Right cardiac atrium (tissue), 5 donors: ENCODE measurements at regions of chr15 and their contacts with region 1.

Region 1: GRCh38 chr15:70466895-70467529 is 296.3 kb downstream of the UACA start:
- DNase-seq: peak in 2 of 3 donors; percentile 42 to 80
- ATAC-seq: peak; percentile 53 to 54
- H3K4me3 ChIP-seq: no peak overlapping the region
- H3K27ac ChIP-seq: no peak overlapping the region
- H3K4me1 ChIP-seq: no peaks in the 10 kb centered on the region
- H3K27me3 ChIP-seq: no peaks in the 10 kb centered on the region

Region 2: DNA sequence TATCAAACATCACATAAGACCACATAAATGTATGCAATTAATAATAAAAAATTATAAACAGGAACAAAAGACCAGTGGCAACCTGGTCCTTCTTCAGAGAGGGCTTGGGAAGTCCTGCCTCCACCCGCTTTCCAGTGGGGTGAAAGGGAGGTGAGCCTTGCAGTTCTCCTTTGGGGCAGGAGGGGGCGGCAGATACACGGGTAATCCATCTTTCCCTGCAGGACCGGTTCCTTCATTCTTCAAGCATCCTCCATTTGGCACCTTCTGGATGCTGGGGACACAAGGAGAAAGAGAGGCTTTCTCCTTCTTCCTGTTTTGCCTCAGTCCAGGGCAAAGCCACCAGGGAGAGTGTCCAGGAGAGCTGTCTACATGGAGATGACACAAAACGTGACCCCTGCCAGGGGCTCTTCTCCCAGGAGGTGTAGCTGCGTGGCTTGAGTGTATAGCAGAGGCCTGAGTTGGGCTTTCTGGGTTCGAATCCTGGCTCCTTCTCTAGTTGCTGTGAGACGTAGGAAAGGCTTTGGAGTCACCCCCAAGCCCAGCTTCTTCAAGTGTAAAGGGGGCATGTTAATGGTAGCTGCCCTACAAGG is 991.1 kb before region 1 on chr15:
- intact Hi-C with region 1: loop called in 1 of 4 experiments (anchors 5 kb)
- DNase-seq: peak; percentile 74 to 92 (median 89)
- ATAC-seq: peak; percentile 75 to 80
- H3K4me3 ChIP-seq: no peak overlapping the region
- H3K27ac ChIP-seq: no peak overlapping the region
- H3K4me1 ChIP-seq: no peaks in the 10 kb centered on the region
- H3K27me3 ChIP-seq: no peaks in the 10 kb centered on the region

Region 3: GRCh38 chr15:69576035-69576526 is 890.9 kb before region 1 on chr15:
- intact Hi-C with region 1: loop called in 1 of 4 experiments (anchors 10 kb)
- DNase-seq: peak; percentile 43 to 77 (median 76)
- ATAC-seq: peak; percentile 73 to 76
- H3K4me3 ChIP-seq: no peak overlapping the region
- H3K27ac ChIP-seq: no peak overlapping the region
- H3K4me1 ChIP-seq: no peaks in the 10 kb centered on the region
- H3K27me3 ChIP-seq: no peaks in the 10 kb centered on the region

Region 4: DNA sequence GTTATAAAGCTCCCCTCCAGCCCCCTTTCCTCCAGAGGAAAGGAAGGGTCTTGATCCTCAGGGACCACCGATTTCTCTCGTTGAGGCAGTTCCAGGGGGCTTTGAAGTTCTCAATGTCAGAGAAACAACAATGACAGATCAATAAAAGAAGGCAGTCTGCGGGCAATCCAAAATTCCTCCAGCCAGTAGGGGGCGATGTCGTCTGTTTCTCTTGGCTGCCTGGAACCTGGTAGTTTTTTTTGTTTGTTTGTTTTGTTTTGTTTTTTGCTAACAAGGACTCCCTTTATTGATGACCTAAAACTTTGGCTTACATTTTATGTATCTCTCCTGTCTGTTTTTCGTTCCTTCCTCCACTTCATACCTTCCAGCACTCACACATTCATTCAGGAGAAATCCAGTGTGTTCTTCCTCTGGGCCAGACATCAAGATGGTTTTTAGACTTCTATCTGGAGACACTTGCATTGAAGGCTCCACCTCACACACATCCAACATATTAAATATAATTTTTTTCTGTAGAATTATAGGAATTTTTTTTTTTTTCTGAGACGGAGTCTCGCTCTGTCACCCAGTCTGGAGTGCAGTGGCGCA is 737.8 kb before region 1 on chr15:
- intact Hi-C with region 1: loop called in 1 of 4 experiments (anchors 10 kb)
- DNase-seq: peak in 2 of 3 donors; percentile 28 to 69
- ATAC-seq: no peak
- H3K4me3 ChIP-seq: no peak overlapping the region
- H3K27ac ChIP-seq: no peak overlapping the region
- H3K4me1 ChIP-seq: no peaks in the 10 kb centered on the region
- H3K27me3 ChIP-seq: no peaks in the 10 kb centered on the region

Region 5: DNA sequence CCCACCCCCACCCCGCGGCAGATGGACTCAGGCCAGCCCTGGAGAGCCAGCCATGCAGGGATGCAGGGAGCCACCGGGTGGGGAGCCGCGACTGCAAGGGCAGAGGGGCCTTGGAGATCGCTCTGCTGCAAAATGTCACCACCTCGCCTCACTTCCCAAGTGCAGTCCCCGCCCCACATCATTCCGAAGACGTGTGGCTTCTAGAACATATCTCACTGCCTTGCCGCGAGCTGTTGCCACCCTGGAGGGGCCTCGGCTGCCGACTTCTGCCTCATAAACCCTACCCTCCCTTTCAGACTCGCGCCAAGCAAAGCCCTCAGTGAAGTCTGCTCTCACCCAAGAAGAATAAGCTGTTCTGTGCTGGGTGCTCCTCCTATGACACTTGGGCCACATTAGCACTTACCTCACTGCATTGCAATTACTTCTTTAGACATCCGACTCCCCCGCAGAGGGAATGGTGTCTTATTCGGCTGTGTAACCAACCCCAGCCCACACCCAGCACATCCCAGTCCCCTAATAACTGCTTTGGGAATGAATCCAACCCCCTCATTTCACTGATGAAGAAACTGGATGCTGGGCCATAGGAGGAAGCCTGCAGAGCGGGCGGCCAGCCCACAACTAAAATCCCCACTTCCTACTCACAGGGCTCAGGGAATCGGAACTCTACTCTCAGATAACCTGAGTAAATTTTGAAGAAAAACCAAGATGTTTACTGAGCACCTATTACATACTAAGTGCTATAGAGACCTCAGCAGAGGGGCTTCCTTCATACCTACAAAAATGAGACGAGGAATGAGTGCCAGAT is 377.9 kb before region 1 on chr15:
- intact Hi-C with region 1: loop called in 2 of 4 experiments (anchors 10 kb)
- DNase-seq: peak; percentile 74 to 81 (median 80)
- ATAC-seq: peak; percentile 62 to 64
- H3K4me3 ChIP-seq: no peak overlapping the region
- H3K27ac ChIP-seq: peak overlapping the region; percentile 3
- H3K4me1 ChIP-seq: peaks cover 32% of the 10 kb centered on the region
- H3K27me3 ChIP-seq: no peaks in the 10 kb centered on the region

Region 6: DNA sequence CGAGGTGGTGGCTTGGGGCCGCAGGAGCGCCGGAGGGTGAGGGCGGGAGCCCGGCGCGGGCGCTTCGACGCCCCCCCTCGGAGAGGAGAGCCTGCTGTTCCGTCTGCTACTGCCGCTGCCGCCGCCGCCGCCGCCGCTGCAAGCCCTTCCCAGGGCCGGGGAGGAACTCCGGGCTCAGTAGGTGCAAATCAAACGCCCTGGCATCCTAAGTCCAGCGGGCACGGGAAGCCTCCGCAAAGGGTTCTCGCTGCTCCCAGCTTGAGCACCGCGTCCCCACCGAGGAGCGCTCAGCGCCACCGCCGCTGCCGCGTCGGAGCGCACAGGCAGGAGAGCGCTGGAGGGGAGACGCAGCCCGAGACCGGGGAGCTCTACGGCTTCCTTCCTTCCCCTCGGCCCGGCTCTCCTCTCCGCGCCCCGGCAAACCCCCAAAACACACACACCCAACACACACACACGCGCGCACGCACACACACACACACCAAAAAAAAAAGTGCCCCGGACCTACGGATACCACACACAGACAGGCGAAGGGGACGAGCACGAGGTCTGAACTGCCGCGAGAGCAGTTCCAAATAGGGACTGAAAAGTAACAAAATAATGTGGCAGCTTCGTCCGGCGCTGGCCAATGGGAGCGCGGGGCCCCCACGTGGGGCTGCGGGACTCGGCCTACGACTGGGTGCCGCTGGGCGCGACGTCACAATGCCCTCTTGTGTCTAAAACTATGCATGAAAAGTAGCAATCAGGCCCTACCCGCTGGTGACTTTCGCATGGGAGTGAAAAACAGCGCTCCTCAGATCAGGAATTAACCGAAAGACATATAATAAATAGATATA is 369.5 kb before region 1 on chr15 and contains the start of gene TLE3:
- intact Hi-C with region 1: loop called in 1 of 4 experiments (anchors 10 kb)
- DNase-seq: peak; percentile 99 to 100 (median 99)
- ATAC-seq: peak; percentile 77 to 81
- H3K4me3 ChIP-seq: peak within 1 kb of the TSS; percentile 91
- H3K27ac ChIP-seq: peak within 1 kb of the TSS; percentile 86
- H3K4me1 ChIP-seq: peaks cover 13% of the 10 kb centered on the region
- H3K27me3 ChIP-seq: no peaks in the 10 kb centered on the region
- total RNA-seq, gene TLE3: 20.6 to 35.4 (median 27.4) TPM

Region 7: DNA sequence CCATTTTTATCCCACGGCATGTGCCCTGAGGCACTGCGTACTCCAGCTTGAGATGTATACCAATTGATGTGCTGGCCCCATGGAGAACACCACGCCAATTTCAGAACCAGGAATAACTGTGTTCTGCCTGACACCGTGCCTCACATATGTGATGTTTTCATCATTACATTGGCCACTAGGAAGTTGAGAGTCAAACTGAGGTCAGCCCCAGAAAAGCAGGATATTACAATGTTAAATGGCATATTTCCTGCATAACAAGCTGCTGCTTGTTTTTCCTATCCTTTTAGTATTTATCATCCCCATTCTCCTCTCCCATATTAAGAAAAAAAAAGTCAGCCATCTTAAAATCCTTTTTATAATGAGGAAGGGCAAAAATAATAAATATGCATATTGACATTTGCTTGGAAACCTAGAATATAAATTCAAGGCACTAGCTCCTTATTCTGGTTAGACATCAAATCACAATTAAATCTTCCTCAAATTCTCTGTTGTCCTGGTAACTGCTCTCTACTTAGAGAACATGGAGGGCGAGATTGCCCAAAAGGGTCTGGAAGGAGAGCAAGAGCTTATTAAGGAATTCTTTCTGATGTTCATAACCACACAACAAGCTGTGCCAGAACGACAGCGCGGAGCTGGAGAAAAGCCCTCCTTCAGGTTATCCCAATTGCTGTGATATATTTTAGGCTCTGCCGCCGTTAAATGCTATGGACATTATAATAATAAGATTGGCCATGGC is 183.7 kb after region 1 on chr15:
- intact Hi-C with region 1: no loop called
- DNase-seq: no peak
- ATAC-seq: no peak
- H3K4me3 ChIP-seq: no peak overlapping the region
- H3K27ac ChIP-seq: no peak overlapping the region
- H3K4me1 ChIP-seq: no peaks in the 10 kb centered on the region
- H3K27me3 ChIP-seq: no peaks in the 10 kb centered on the region